Activated T-helper 1 cell treated with anti-CD3 and anti-CD28 coated beads, Interleukin-12 subunit alpha, Interleukin-12 subunit beta, Interleukin-2, Interleukin-4 antibody, amounts not matched to agents 30 ng/mL and 10 ng/mL and 1 ng/mL, durations not matched to agents 14 hours and 24 hours and 36 hours (primary cell): ENCODE measurements at regions of chr3 and their contacts with region 1.

Region 1: GRCh38 chr3:112990672-112991602 is at the start of gene GTPBP8:
- DNase-seq: peak; percentile 81
- H3K4me3 Mint-ChIP-seq: peak within 1 kb of the TSS; percentile 90
- H3K27ac Mint-ChIP-seq: peak within 1 kb of the TSS; percentile 93
- H3K4me1 Mint-ChIP-seq: peaks cover 79% of the 10 kb centered on the region
- H3K27me3 Mint-ChIP-seq: no peaks in the 10 kb centered on the region
- total RNA-seq, gene GTPBP8: 22.6 and 25.0 TPM in 2 replicates

Region 2: GRCh38 chr3:112979240-112979832 is 11.6 kb before region 1 on chr3:
- intact Hi-C with region 1: loop called (anchors 1 kb)
- DNase-seq: no peak
- H3K4me3 Mint-ChIP-seq: no peak overlapping the region
- H3K27ac Mint-ChIP-seq: no peak overlapping the region
- H3K4me1 Mint-ChIP-seq: peaks cover 67% of the 10 kb centered on the region
- H3K27me3 Mint-ChIP-seq: no peaks in the 10 kb centered on the region

Region 3: GRCh38 chr3:113005611-113006010 is 14.7 kb after region 1 on chr3:
- intact Hi-C with region 1: loop called (anchors 1 kb)
- DNase-seq: peak; percentile 24
- H3K4me3 Mint-ChIP-seq: peak overlapping the region; percentile 67
- H3K27ac Mint-ChIP-seq: peak overlapping the region; percentile 91
- H3K4me1 Mint-ChIP-seq: peaks cover 83% of the 10 kb centered on the region
- H3K27me3 Mint-ChIP-seq: no peaks in the 10 kb centered on the region